ENCODE measurements at regions of chr18 and their contacts with region 1.

Region 1: DNA sequence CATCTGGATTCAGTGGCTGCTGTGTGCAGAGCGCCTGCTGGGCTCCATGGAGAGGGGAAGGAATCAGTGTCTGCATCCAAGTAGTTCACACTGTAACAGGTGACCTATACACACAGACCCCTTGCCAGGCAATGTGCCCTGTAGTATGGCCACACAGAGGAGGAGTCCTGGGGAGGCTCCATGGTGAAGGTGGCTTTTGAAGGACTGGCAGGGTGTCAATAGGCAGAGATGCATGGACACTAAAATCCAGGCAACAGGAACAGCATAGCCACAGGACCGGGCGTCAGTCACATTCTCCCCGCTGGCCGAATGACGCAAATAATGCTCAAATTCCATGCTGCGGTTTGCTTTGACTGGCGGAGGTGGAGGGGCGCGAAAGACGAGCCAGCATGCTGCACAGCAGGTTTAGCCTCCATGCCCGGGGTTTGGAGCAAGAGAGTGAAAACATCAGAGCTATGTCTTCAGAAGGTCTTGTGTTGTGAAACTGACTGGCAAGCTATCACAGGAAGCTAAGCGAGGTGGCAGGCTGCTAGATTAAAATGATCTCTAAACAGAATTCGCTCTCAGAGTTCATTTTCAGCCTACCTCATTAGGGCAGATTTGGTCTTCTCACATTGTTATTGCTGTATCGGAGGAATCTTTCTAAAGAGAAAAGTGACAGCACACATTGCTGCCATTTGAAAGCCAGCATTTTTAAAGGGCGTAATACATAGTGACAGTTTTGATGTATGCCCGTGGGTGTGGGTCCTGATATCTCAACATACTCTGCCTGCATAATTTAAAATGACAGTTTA is 1.2 kb upstream of the CHMP1B start:
- DNase-seq: peak; percentile 71
- H3K4me3 ChIP-seq: peak overlapping the region; percentile 33 to 92 (median 76)
- H3K27ac ChIP-seq: peak overlapping the region; percentile 91 to 98 (median 96)
- H3K4me1 ChIP-seq: peaks cover 15 to 36% (median 19%) of the 10 kb centered on the region in 4 donors
- H3K27me3 ChIP-seq: no peaks in the 10 kb centered on the region
- CTCF ChIP-seq: peak in 1 of 5 experiments; percentile 7
- EP300 ChIP-seq: no peak
- POLR2A ChIP-seq: peak; percentile 26

Region 2: DNA sequence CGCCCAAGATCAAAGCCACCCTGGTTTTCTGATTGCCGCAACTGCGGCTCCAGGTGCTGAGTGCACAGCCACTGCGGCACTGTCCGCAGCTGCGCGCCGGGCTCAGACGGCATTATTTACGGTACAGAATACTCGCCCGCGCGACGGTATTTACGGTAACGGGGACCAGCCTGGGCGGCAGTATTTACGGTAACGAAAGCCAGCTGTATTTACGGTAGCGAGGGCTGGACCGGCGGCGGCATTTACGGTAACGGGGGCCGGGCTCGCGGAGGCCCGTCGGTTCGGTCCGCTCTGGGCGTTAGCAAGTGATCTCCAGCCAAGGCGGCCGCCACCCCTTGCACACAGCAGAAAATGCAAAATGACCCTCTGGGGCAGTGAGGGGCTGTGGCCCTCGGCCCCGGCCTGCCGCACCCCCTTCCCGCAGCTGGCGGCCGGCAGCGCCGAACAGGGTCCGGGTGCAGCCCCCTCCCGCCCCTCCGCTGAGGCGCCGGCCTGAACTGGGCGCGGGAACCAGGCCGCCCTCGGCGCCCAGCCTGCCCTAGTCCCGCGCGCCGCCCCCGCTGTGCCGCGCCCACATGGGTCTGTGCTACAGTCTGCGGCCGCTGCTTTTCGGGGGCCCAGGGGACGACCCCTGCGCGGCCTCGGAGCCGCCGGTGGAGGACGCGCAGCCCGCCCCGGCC is 160.9 kb before region 1 on chr18 and contains the start of gene GNAL:
- in situ Hi-C with region 1: no loop called
- intact Hi-C with region 1: loop called (anchors 5 kb)
- DNase-seq: peak; percentile 79
- H3K4me3 ChIP-seq: peak within 1 kb of the TSS; percentile 38 to 72 (median 60)
- H3K27ac ChIP-seq: peak within 1 kb of the TSS; percentile 44 to 85 (median 66)
- H3K4me1 ChIP-seq: peaks cover 6 to 16% (median 6%) of the 10 kb centered on the region in 4 donors
- H3K27me3 ChIP-seq: peaks cover 38% of the 10 kb centered on the region
- CTCF ChIP-seq: no peak
- EP300 ChIP-seq: peak; percentile 17
- POLR2A ChIP-seq: no peak
- total RNA-seq, gene GNAL: 2.9 to 7.4 (median 7.2) TPM

Region 3: GRCh38 chr18:12060182-12060870 is 210.3 kb after region 1 on chr18:
- in situ Hi-C with region 1: no loop called
- intact Hi-C with region 1: no loop called
- DNase-seq: no peak
- H3K4me3 ChIP-seq: no peak overlapping the region
- H3K27ac ChIP-seq: no peak overlapping the region
- H3K4me1 ChIP-seq: no peaks in the 10 kb centered on the region
- H3K27me3 ChIP-seq: no peaks in the 10 kb centered on the region
- CTCF ChIP-seq: no peak
- EP300 ChIP-seq: no peak
- POLR2A ChIP-seq: no peak

Measured in transverse colon (tissue), 4 donors.